GM10248 (cell line): ENCODE measurements at regions of chr1 and their contacts with region 1.

Region 1: GRCh38 chr1:145845514-145846161 is at the start of gene NUDT17:
- DNase-seq: peak; percentile 83
- CTCF ChIP-seq: peak; percentile 89

Region 2: GRCh38 chr1:145871994-145872924 is 26.6 kb after region 1 on chr1:
- CTCF ChIA-PET with region 1: interaction called, 32 read pairs
- POLR2A ChIA-PET with region 1: no interaction called
- DNase-seq: peak; percentile 65
- CTCF ChIP-seq: no peak

Region 3: DNA sequence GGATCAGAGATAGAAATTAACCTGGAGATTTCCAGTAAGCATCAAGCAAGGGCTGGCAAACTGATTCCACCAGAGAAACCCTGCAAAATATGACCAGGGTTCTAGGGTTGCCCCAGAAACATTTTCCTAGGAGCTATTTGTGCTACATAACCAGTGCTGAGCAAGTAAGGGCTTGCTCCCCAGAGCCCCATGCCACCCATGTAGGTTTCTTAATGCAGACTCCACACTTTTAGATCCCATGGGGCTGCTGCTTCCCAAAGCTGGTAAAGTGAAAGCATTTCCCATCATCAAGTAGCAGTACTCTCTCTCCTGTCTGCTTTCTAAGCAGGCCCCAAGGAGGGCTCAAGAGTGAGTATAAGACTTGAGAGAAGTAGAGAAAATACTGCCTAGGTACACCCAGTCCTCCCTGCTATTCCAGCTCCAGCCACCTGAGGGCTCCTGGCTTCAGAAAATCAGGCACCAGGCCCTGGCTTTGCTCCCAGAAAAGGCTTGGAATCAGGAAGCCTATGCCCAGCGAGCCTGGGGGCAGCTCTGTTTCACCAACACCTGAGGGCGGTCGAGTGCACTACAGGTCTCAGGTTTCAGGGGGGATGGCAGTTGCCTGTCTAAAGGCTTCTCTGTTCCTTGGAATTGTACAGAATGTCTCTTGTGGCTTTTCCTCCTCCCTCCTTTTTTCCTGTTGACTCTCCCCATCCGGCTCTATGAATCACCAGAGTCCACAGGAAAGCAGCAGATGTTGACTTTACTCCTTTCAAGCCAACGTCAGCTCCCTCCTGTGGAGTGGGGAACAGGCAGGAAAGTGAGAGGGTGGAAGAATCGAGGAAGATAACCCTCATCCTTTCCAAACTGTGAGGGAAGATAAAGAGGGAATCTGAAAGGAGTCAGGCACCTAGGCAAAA is 46.2 kb after region 1 on chr1:
- CTCF ChIA-PET with region 1: interaction called, 33 read pairs
- POLR2A ChIA-PET with region 1: no interaction called
- DNase-seq: peak; percentile 76
- CTCF ChIP-seq: peak; percentile 85

Region 4: GRCh38 chr1:145978854-145979759 is 133.5 kb after region 1 on chr1:
- CTCF ChIA-PET with region 1: interaction called, 24 read pairs
- POLR2A ChIA-PET with region 1: no interaction called
- DNase-seq: peak; percentile 85
- CTCF ChIP-seq: peak; percentile 42

Region 5: DNA sequence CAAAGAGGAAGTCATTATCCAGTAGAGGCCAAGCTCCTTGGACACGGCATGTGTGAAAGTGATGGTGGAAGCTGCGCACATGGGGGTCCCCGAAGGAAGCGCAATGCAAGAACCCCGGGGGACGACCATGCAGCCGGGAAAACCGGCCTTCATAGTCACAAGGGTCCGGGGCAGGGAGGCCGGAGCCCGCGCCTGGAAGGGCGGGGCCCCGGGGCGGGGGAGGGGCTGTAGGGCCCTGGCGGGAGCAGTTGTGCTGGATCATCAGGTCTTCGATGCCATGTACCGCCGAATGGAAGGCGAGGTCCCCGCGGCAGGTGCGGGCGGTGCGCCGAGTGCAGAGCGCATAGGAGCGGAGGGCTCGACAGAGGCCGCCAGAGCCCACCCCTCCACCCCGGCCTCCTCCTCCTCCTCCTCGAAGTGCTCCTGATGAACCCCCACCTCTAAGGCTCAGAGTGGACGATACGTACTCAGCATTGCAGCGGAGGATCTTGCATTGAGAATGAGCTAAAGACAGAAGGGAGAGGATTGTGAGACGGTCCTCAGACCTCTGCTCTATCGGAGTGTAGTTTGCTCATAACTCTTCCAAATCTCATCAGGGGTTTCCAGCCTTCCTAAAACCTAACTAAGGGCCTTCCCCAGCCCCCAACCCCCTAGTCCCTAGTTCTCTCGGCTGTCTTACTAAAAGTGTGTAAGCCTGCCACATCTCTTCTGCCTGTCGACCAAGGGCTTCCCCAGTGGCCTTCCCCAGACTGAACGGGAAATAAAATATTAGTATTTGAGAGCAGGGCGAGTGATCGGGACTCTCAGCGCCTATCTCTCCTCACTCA is 173.8 kb after region 1 on chr1:
- CTCF ChIA-PET with region 1: interaction called, 53 read pairs
- POLR2A ChIA-PET with region 1: no interaction called
- DNase-seq: no peak
- CTCF ChIP-seq: no peak